GM10248 (cell line): ENCODE measurements at regions of chr9 and their contacts with region 1.

Region 1: GRCh38 chr9:113657703-113658544 is 194.4 kb downstream of the RGS3 start:
- DNase-seq: peak; percentile 88
- CTCF ChIP-seq: peak; percentile 91

Region 2: DNA sequence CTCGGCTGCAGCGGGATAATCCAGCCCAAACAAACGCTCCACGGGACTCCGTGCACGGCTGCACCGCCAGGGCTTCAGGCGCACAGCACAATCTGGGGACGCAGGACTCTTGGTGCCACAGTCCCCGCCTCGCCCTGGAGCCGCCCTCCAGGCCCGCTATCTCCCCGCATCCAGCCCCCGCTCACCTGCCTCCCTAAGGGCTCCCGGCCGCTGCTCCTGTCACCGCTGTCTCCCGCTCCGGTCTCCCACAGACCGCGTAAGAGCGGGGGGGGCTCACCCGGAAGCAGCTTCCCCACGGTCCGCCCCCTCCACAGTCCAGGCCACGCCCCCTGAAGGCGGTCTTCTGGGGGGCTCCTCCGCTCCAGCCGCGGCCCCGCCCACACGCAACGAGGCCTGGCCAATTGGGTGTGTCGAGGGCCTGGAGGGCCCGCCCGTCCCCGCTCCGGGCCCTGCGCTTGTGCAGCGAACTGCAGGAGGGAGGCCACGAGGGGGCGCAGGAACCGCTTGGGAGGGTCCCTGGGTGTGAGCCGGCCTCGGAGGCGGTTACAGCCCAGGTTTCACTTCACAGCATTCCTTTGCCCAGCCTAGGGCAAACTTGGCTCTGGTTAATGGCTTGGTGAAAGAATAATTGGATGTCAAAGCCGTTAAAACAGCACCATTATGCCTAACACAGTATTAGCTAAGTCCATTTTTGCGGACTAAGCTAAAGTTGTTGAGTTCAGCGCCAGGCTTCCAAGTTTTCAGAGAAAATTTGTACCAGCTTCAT is 256.7 kb before region 1 on chr9 and contains the start of gene ALAD:
- CTCF ChIA-PET with region 1: interaction called, 102 read pairs
- POLR2A ChIA-PET with region 1: no interaction called
- DNase-seq: peak; percentile 100
- CTCF ChIP-seq: peak; percentile 93

Region 3: GRCh38 chr9:113454914-113455761 is 202.8 kb before region 1 on chr9:
- CTCF ChIA-PET with region 1: interaction called, 61 read pairs
- POLR2A ChIA-PET with region 1: no interaction called
- DNase-seq: no peak
- CTCF ChIP-seq: no peak

Region 4: DNA sequence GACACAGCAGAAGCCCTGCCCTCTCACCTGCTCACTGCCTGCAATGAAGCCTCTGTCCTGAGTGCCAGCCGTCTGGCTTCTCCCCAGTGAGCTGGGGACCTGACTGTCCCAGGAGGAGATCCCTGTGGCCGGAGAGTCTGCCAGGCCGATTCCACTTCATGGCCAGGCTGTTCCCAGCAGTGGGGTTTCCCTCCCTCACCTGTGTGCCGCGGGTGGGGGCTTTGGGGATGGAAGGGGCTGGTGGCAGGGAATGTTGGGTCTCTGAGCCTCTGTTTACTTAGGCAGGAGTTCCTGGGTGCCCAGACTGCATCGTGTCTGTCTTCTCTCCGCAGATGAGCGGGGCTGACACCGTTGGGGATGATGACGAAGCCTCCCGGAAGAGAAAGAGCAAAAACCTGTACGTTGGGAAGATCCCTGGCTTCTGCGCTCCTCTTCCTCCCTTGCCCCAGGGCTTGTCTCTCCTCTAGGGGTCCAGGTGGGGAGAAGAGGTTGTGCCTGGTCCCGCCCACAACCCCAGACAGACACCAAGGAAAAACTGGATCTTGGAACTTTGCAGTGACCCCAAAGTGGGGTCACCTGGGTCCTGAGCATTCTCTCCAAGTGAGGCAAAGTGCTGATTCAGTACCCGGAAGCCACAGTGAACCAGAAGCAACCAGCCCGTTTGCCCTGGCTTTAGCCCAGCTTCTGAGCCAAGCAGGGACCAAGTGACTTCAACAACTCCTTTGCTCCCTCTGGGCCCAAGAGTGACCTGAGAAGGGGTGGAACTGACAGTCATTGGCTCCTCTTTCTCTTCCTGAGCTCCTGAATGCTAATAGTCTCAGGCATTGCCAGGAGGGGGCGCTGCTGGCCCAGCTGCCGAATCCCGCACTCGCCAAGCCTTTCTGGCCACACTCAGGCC is 66.7 kb before region 1 on chr9:
- CTCF ChIA-PET with region 1: interaction called, 422 read pairs
- POLR2A ChIA-PET with region 1: no interaction called
- DNase-seq: peak; percentile 77
- CTCF ChIP-seq: peak; percentile 88

Region 5: GRCh38 chr9:113622600-113623400 is 35.1 kb before region 1 on chr9:
- CTCF ChIA-PET with region 1: interaction called, 134 read pairs
- POLR2A ChIA-PET with region 1: no interaction called
- DNase-seq: peak; percentile 76
- CTCF ChIP-seq: no peak

Region 6: GRCh38 chr9:113675475-113675941 is 17.6 kb after region 1 on chr9:
- CTCF ChIA-PET with region 1: interaction called, 64 read pairs
- POLR2A ChIA-PET with region 1: no interaction called
- DNase-seq: no peak
- CTCF ChIP-seq: no peak